ENCODE measurements at regions of chr19 and their contacts with region 1.

Region 1: GRCh38 chr19:50368649-50369570 is 3.5 kb upstream of the NAPSA start:
- DNase-seq: peak; percentile 94
- H3K4me3 ChIP-seq: peak overlapping the region; percentile 69
- H3K27ac ChIP-seq: peak overlapping the region; percentile 81
- H3K4me1 ChIP-seq: no peaks in the 10 kb centered on the region
- H3K27me3 ChIP-seq: no peaks in the 10 kb centered on the region
- CTCF ChIP-seq: peak; percentile 89

Region 2: GRCh38 chr19:50290011-50290410 is 78.9 kb before region 1 on chr19:
- intact Hi-C with region 1: no loop called
- DNase-seq: no peak
- H3K4me3 ChIP-seq: no peak overlapping the region
- H3K27ac ChIP-seq: no peak overlapping the region
- H3K4me1 ChIP-seq: no peaks in the 10 kb centered on the region
- H3K27me3 ChIP-seq: no peaks in the 10 kb centered on the region
- CTCF ChIP-seq: no peak

Region 3: GRCh38 chr19:50315773-50316448 is 53.0 kb before region 1 on chr19:
- intact Hi-C with region 1: no loop called
- DNase-seq: no peak
- H3K4me3 ChIP-seq: no peak overlapping the region
- H3K27ac ChIP-seq: no peak overlapping the region
- H3K4me1 ChIP-seq: no peaks in the 10 kb centered on the region
- H3K27me3 ChIP-seq: peaks cover 11% of the 10 kb centered on the region
- CTCF ChIP-seq: no peak

Region 4: DNA sequence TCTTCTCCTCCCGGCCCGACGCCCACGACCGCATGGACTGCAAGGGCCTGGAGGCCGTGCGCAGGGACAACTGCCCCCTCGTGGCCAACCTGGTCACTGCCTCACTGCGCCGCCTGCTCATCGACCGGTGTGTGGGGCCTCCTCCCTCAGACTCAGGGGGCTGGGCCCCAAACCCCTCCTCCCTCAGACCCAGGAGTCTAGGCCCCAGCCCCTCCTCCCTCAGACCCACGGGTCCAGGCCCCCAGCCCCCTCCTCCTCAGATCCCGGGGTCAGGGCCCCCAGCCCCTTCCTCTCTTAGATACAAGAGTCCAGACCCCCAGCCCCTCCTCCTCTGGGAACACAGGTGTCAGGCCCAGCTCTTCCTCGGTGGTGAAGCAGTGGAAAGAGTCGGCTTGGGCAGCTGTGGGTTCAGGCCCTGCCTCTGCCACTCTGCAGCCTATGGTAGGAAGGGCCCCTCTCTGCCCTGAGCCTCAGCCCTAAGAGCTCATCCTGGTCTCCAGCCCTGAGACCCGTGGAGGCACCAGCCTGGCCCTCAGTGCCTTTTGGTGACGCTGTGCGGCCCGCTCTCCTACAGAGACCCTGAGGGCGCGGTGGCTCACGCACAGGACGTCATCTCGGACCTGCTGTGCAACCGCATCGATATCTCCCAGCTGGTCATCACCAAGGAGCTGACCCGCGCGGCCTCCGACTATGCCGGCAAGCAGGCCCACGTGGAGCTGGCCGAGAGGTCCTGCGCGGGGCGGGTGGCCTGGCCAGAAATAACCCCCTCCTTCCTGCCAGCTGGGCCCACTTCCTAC is 46.2 kb after region 1 on chr19:
- intact Hi-C with region 1: loop called (anchors 5 kb)
- DNase-seq: peak; percentile 75
- H3K4me3 ChIP-seq: no peak overlapping the region
- H3K27ac ChIP-seq: no peak overlapping the region
- H3K4me1 ChIP-seq: peaks cover 5% of the 10 kb centered on the region
- H3K27me3 ChIP-seq: peaks cover 22% of the 10 kb centered on the region
- CTCF ChIP-seq: peak; percentile 92

Region 5: GRCh38 chr19:50461066-50461875 is 92.4 kb after region 1 on chr19:
- intact Hi-C with region 1: loop called (anchors 2 kb)
- DNase-seq: peak; percentile 65
- H3K4me3 ChIP-seq: no peak overlapping the region
- H3K27ac ChIP-seq: no peak overlapping the region
- H3K4me1 ChIP-seq: no peaks in the 10 kb centered on the region
- H3K27me3 ChIP-seq: no peaks in the 10 kb centered on the region
- CTCF ChIP-seq: peak; percentile 76

Region 6: GRCh38 chr19:50511068-50511822 is 142.3 kb after region 1 on chr19 and contains the start of gene JOSD2:
- intact Hi-C with region 1: no loop called
- DNase-seq: peak; percentile 97
- H3K4me3 ChIP-seq: peak within 1 kb of the TSS; percentile 63
- H3K27ac ChIP-seq: peak within 1 kb of the TSS; percentile 63
- H3K4me1 ChIP-seq: no peaks in the 10 kb centered on the region
- H3K27me3 ChIP-seq: peaks cover 3% of the 10 kb centered on the region
- CTCF ChIP-seq: no peak
- total RNA-seq, gene JOSD2: 27.0 to 45.0 TPM

Region 7: GRCh38 chr19:50779504-50780457 is 410.9 kb after region 1 on chr19:
- intact Hi-C with region 1: loop called (anchors 5 kb)
- DNase-seq: no peak
- H3K4me3 ChIP-seq: no peak overlapping the region
- H3K27ac ChIP-seq: no peak overlapping the region
- H3K4me1 ChIP-seq: no peaks in the 10 kb centered on the region
- H3K27me3 ChIP-seq: peaks cover 13% of the 10 kb centered on the region
- CTCF ChIP-seq: no peak